Activated CD8-positive, alpha-beta T cell treated with anti-CD3 and anti-CD28 coated beads for 36 hours (primary cell): ENCODE measurements at regions of chr1 and their contacts with region 1.

Region 1: DNA sequence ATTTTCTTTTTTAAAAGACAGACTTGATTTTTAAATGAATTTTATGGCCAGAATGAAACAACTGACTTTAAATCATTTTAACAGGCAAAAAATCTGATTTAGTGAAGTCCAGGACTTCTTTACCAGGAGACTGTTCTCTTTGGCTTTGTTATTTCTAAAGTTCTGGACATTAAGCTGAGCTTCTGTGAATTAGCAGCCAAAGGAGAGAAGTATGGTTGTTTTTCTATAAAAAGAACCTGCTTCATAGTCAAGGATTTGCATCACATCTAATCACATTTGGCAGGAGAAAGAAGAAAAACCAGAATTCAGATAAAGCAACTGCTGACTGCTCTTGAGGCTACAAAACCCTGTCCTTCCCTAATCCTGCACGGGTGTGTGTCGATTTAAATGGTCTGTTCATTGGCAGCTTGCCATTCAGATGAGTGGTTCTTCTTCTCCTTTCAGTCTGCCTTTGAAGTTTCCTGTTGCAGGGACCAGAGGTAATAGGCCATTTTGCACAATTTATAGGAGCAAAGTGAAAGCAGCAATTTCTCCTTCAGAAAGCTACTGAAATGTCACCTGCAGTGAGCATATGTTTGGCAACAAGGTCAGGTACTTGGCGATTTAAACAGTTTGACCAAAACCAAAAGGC is 215.4 kb downstream of the OLFM3 start:
- DNase-seq: no peak
- ATAC-seq: no peak
- H3K4me3 Mint-ChIP-seq: no peak overlapping the region
- H3K27ac Mint-ChIP-seq: no peak overlapping the region
- H3K4me1 Mint-ChIP-seq: no peaks in the 10 kb centered on the region
- H3K27me3 Mint-ChIP-seq: no peaks in the 10 kb centered on the region
- CTCF ChIP-seq: no peak

Region 2: GRCh38 chr1:101338714-101339430 is 442.4 kb before region 1 on chr1:
- CTCF ChIA-PET with region 1: no interaction called
- POLR2A ChIA-PET with region 1: no interaction called
- intact Hi-C with region 1: no loop called
- DNase-seq: peak; percentile 54
- ATAC-seq: peak; percentile 96
- H3K4me3 Mint-ChIP-seq: no peak overlapping the region
- H3K27ac Mint-ChIP-seq: no peak overlapping the region
- H3K4me1 Mint-ChIP-seq: peaks cover 18% of the 10 kb centered on the region
- H3K27me3 Mint-ChIP-seq: no peaks in the 10 kb centered on the region
- CTCF ChIP-seq: no peak

Region 3: DNA sequence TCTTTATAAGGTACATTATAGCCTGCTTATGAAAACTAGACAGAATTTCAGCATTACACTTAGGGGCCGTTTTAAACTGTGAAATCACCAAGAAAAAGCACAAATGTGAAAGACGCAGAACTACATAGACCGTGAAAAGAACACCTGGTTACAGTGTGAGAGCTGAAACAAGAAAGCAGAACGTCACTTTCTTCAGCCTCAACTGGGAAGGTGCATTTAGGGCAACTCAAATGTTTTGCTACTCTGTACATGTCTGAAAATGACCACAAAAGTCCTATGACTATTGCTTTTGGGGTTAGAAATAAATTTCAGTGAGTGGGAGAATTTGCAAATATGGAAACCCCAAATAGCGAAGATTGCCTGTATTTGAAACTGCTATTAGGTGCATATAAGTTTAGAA is 53.3 kb before region 1 on chr1:
- CTCF ChIA-PET with region 1: no interaction called
- POLR2A ChIA-PET with region 1: no interaction called
- intact Hi-C with region 1: loop called (anchors 10 kb)
- DNase-seq: no peak
- ATAC-seq: no peak
- H3K4me3 Mint-ChIP-seq: no peak overlapping the region
- H3K27ac Mint-ChIP-seq: no peak overlapping the region
- H3K4me1 Mint-ChIP-seq: no peaks in the 10 kb centered on the region
- H3K27me3 Mint-ChIP-seq: no peaks in the 10 kb centered on the region
- CTCF ChIP-seq: no peak